Heart right ventricle (tissue), 16 donors: ENCODE measurements at regions of chr1 and their contacts with region 1.

Region 1: GRCh38 chr1:32933742-32934322 is 30.8 kb downstream of the RNF19B start:
- DNase-seq: peak in 1 of 2 donors; percentile 38
- ATAC-seq: peak; percentile 28 to 70 (median 62)
- H3K4me3 ChIP-seq: no peak overlapping the region
- H3K27ac ChIP-seq: peak overlapping the region in 7 of 10 donors; percentile 3 to 74 (median 45)
- H3K4me1 ChIP-seq: peaks cover 3 to 32% (median 14%) of the 10 kb centered on the region in 9 donors
- H3K27me3 ChIP-seq: no peaks in the 10 kb centered on the region
- CTCF ChIP-seq: peak in 1 of 9 donors; percentile 28

Region 2: DNA sequence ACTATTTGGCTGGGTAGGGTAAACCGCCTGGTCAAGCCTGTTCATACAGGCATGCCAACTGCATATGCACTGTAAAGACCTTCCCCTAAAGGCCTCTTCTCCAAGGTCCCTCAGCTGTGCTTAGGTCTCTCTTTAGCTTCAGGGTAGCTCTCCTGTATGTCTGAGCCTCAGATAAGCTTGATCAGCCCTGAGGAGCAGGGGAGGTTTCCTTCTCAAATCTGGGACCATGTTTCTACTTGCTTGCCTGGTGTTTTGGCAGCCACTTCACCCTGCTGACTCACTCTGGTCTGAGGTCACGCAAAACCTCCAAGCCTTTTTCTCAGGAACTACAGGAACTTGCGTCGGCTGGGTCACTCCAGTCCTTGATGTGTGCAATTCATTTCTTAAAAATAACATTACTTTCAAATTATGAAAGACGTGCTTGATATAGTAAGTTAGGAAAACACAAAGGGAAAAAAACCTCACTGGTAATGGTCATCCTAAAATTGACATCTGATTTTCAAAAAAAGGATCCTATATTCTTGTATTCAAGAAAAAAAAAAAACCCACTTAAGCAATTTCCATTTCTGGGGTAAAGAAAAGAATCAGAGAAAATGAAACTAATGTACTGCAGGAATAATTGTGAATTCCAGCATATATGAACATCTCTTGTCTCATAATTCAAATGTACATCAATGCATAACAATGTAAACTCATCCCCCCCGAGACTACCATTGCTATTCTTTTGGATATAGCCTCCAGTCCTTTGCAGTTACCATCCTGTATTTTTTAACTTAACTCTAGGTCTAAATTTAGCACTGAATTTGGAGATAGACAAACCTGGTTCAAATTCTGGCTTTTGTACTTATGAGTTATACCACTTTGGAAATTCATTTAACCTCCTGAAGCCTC is 55.6 kb after region 1 on chr1:
- intact Hi-C with region 1: no loop called
- DNase-seq: peak; percentile 42 to 89
- ATAC-seq: peak; percentile 61 to 87 (median 80)
- H3K4me3 ChIP-seq: no peak overlapping the region
- H3K27ac ChIP-seq: peak overlapping the region in 9 of 10 donors; percentile 17 to 90 (median 66)
- H3K4me1 ChIP-seq: peaks cover 12 to 92% (median 52%) of the 10 kb centered on the region in 9 donors
- H3K27me3 ChIP-seq: no peaks in the 10 kb centered on the region
- CTCF ChIP-seq: no peak

Region 3: GRCh38 chr1:33007190-33008050 is 73.6 kb after region 1 on chr1:
- intact Hi-C with region 1: loop called in 4 of 10 experiments (anchors 5 to 10 kb)
- DNase-seq: peak in 1 of 2 donors; percentile 30
- ATAC-seq: peak in 7 of 8 donors; percentile 31 to 74 (median 56)
- H3K4me3 ChIP-seq: no peak overlapping the region
- H3K27ac ChIP-seq: peak overlapping the region in 4 of 10 donors; percentile 13 to 95 (median 88)
- H3K4me1 ChIP-seq: peaks cover 24 to 99% (median 75%) of the 10 kb centered on the region in 9 donors
- H3K27me3 ChIP-seq: no peaks in the 10 kb centered on the region
- CTCF ChIP-seq: peak in 8 of 9 donors; percentile 29 to 56 (median 54)

Region 4: GRCh38 chr1:33055210-33056008 is 121.6 kb after region 1 on chr1:
- intact Hi-C with region 1: loop called in 9 of 10 experiments (anchors 1 to 10 kb)
- DNase-seq: peak; percentile 75 to 91
- ATAC-seq: peak; percentile 88 to 98 (median 95)
- H3K4me3 ChIP-seq: no peak overlapping the region
- H3K27ac ChIP-seq: peak overlapping the region in 8 of 10 donors; percentile 24 to 74 (median 50)
- H3K4me1 ChIP-seq: peaks cover 4 to 24% (median 14%) of the 10 kb centered on the region in 9 donors
- H3K27me3 ChIP-seq: no peaks in the 10 kb centered on the region
- CTCF ChIP-seq: peak; percentile 58 to 82 (median 78)

Region 5: GRCh38 chr1:33086384-33086850 is 152.6 kb after region 1 on chr1:
- intact Hi-C with region 1: loop called in 9 of 10 experiments (anchors 1 to 10 kb)
- DNase-seq: peak; percentile 66 to 76
- ATAC-seq: peak; percentile 66 to 88 (median 84)
- H3K4me3 ChIP-seq: no peak overlapping the region
- H3K27ac ChIP-seq: no peak overlapping the region
- H3K4me1 ChIP-seq: peaks cover 0 to 20% (median 9%) of the 10 kb centered on the region in 9 donors
- H3K27me3 ChIP-seq: peaks cover 0 to 10% (median 0%) of the 10 kb centered on the region in 7 donors
- CTCF ChIP-seq: peak; percentile 62 to 89 (median 78)